Activated CD8-positive, alpha-beta T cell treated with anti-CD3 and anti-CD28 coated beads for 36 hours (primary cell): ENCODE measurements at regions of chr11 and their contacts with region 1.

Region 1: DNA sequence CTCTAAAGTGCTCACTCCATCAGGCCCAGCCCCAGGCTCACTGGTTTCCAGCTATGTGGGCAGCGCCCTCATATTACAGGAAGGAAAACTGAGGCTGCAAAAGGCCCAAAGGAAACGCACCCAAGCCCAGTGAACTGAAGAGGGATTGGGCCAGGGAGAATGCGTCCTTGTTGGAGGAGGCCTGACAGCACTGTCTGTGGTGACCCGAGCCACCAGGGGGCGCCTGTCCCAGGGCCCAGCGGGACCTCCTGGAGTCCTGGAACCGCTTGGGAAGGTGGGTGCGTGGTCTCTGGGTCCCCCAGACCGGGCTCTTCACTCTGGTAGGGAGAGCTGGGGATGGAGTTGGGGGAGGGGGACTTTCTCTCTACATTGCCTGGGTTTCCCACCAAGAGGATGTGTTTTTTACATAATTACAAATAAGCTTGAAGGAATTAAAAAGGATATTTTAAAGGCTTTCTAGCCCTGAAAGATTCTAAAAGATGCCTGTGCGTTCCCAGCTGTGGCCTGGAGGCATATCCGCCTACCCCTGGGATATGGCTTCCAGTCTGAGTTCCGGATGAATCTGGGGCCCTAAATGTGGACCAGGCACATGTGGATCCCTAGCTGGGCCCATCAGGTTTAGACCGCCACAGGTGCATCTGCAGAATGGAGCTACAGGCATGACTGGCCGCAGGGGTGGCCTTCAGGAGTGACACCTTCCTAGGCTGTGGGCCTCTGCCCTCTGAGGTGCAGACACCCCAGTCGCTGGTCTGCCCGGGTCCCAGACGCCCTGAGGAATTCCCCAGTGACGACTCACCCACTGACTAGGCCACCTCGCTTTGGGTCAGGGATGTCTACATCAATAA is 4.2 kb downstream of the SPI1 start:
- DNase-seq: peak; percentile 89
- ATAC-seq: peak; percentile 89
- H3K4me3 Mint-ChIP-seq: no peak overlapping the region
- H3K27ac Mint-ChIP-seq: no peak overlapping the region
- H3K4me1 Mint-ChIP-seq: peaks cover 20% of the 10 kb centered on the region
- H3K27me3 Mint-ChIP-seq: no peaks in the 10 kb centered on the region
- CTCF ChIP-seq: peak; percentile 95

Region 2: GRCh38 chr11:47359586-47359985 is 14.5 kb before region 1 on chr11:
- CTCF ChIA-PET with region 1: interaction called, 21 read pairs
- POLR2A ChIA-PET with region 1: interaction called, 4 read pairs
- intact Hi-C with region 1: no loop called
- DNase-seq: peak; percentile 23
- ATAC-seq: peak; percentile 37
- H3K4me3 Mint-ChIP-seq: no peak overlapping the region
- H3K27ac Mint-ChIP-seq: peak overlapping the region; percentile 48
- H3K4me1 Mint-ChIP-seq: peaks cover 12% of the 10 kb centered on the region
- H3K27me3 Mint-ChIP-seq: no peaks in the 10 kb centered on the region
- CTCF ChIP-seq: no peak

Region 3: DNA sequence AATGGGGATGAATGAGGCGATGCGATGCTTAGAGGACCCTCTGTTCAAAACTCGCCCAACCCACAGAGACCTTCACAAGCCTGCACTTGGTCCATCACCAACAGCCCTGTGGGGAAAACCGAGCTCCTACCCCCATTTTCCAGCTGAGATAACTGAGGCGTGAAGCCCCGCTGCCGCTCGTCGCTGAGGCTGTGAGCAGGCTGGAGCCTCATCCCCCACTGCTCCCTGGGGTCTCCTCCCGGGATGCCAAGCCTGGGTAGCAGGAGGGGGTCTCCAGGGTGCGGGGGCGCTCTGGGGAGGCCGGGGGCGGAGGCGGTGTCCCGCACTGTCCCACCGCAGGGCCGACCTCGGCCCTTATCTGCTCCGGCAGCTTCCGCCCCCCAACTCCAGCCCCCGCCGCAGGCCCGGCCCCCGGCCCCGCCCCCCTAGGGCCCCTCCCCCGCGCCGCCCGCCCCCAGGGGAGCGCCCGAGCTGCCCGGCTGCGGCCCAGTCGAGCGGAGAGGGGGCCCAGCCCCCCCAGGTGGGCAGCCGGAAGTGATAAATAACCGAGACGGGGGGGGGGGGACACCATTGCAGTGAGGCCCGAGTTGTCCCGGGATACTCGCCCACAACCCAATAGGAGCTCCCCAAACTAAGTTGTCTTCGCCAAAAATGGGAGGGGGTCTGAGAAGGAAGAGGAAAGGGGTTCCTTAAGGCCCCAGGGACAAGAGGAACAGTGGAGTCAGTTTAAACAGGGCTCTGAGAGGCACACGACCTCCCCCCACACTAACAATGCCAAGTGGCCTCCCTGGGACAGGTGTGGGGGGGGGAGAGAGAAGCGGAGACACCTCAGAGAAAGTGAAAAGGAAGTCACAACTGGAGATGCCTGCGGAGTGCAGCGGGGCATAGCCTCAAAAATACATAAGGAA is 26.0 kb after region 1 on chr11:
- CTCF ChIA-PET with region 1: interaction called, 91 read pairs
- POLR2A ChIA-PET with region 1: interaction called, 4 read pairs
- intact Hi-C with region 1: no loop called
- DNase-seq: peak; percentile 34
- ATAC-seq: peak; percentile 79
- H3K4me3 Mint-ChIP-seq: peak overlapping the region; percentile 64
- H3K27ac Mint-ChIP-seq: peak overlapping the region; percentile 58
- H3K4me1 Mint-ChIP-seq: peaks cover 19% of the 10 kb centered on the region
- H3K27me3 Mint-ChIP-seq: no peaks in the 10 kb centered on the region
- CTCF ChIP-seq: no peak

Region 4: GRCh38 chr11:47448566-47449427 is 74.7 kb after region 1 on chr11 and contains the start of gene RAPSN:
- CTCF ChIA-PET with region 1: interaction called, 23 read pairs
- POLR2A ChIA-PET with region 1: no interaction called
- intact Hi-C with region 1: no loop called
- DNase-seq: no peak
- ATAC-seq: no peak
- H3K4me3 Mint-ChIP-seq: no peak within 1 kb of the TSS
- H3K27ac Mint-ChIP-seq: no peak within 1 kb of the TSS
- H3K4me1 Mint-ChIP-seq: no peaks in the 10 kb centered on the region
- H3K27me3 Mint-ChIP-seq: no peaks in the 10 kb centered on the region
- CTCF ChIP-seq: no peak
- total RNA-seq, gene RAPSN: 0.36 to 0.81 TPM

Region 5: GRCh38 chr11:47477323-47477722 is 103.2 kb after region 1 on chr11:
- CTCF ChIA-PET with region 1: no interaction called
- POLR2A ChIA-PET with region 1: no interaction called
- intact Hi-C with region 1: no loop called
- DNase-seq: no peak
- ATAC-seq: no peak
- H3K4me3 Mint-ChIP-seq: no peak overlapping the region
- H3K27ac Mint-ChIP-seq: peak overlapping the region; percentile 19
- H3K4me1 Mint-ChIP-seq: peaks cover 5% of the 10 kb centered on the region
- H3K27me3 Mint-ChIP-seq: no peaks in the 10 kb centered on the region
- CTCF ChIP-seq: no peak

Region 6: DNA sequence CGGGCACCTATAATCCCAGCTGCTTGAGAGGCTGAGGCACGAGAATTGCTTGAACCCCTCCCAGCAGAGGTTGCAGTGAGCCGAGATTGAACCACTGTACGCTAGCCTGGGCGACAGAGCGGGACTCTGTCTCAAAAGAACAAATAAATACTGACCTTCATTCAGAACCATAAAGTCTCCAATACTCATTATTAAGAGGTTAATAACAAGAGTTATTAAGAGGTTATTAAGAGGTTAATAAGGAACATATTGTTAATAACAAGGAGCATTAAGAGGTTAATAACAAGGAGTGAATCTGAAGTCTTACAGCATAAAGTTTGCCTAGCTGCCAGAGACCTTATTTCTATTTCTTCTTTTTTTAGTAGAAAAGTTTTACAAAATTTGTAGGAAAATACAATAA is 171.2 kb after region 1 on chr11:
- CTCF ChIA-PET with region 1: no interaction called
- POLR2A ChIA-PET with region 1: no interaction called
- intact Hi-C with region 1: no loop called
- DNase-seq: no peak
- ATAC-seq: no peak
- H3K4me3 Mint-ChIP-seq: no peak overlapping the region
- H3K27ac Mint-ChIP-seq: no peak overlapping the region
- H3K4me1 Mint-ChIP-seq: peaks cover 63% of the 10 kb centered on the region
- H3K27me3 Mint-ChIP-seq: no peaks in the 10 kb centered on the region
- CTCF ChIP-seq: no peak

Region 7: GRCh38 chr11:47847892-47848635 is 474.0 kb after region 1 on chr11 and contains the start of gene NUP160:
- CTCF ChIA-PET with region 1: interaction called, 8 read pairs
- POLR2A ChIA-PET with region 1: no interaction called
- intact Hi-C with region 1: loop called (anchors 5 kb)
- DNase-seq: peak; percentile 92
- ATAC-seq: peak; percentile 88
- H3K4me3 Mint-ChIP-seq: peak within 1 kb of the TSS; percentile 98
- H3K27ac Mint-ChIP-seq: peak within 1 kb of the TSS; percentile 99
- H3K4me1 Mint-ChIP-seq: peaks cover 33% of the 10 kb centered on the region
- H3K27me3 Mint-ChIP-seq: no peaks in the 10 kb centered on the region
- CTCF ChIP-seq: no peak
- total RNA-seq, gene NUP160: 76.4 to 77.0 TPM